CD4-positive, alpha-beta memory T cell (primary cell): ENCODE measurements at regions of chr17 and their contacts with region 1.

Region 1: GRCh38 chr17:34892461-34893249 is 68.6 kb downstream of the CCT6B start:
- DNase-seq: peak in 4 of 5 donors; percentile 18 to 26 (median 22)
- H3K4me3 ChIP-seq: no peak overlapping the region
- H3K4me3 Mint-ChIP-seq: no peak overlapping the region
- H3K27ac ChIP-seq: no peak overlapping the region
- H3K27ac Mint-ChIP-seq: no peak overlapping the region
- H3K4me1 ChIP-seq: no peaks in the 10 kb centered on the region
- H3K4me1 Mint-ChIP-seq: no peaks in the 10 kb centered on the region
- H3K27me3 ChIP-seq: no peaks in the 10 kb centered on the region
- H3K27me3 Mint-ChIP-seq: peaks cover 23 to 38% of the 10 kb centered on the region in 2 donors

Region 2: DNA sequence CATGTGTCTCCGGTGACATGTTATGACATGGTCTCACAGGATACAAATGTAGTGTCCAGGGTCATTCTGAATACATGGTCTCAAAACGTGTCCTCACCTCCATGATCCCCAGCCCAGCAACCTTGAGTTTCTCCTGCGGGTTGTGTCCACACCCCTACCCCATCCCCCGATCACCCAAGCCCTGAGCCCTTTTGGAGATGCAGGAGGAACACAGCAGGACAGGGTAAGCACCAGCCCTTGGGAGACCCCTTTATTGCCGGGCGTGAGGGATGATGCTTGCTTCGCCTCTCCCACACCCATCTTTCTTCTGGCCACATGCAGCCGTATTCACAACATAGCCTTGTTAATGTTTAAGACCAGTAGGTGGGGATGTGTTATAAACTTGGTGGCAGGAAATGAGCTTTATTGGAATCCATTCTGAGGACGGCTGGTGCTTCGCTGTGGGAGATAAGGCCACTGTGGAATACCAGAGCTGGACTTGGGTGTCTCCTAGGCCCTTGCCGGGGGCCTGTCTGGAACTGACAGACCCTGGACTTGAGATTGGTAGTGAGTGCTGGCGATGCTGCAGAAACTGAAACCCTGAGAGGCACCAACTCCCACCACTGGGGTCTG is 307.7 kb before region 1 on chr17:
- CTCF ChIA-PET with region 1: no interaction called
- POLR2A ChIA-PET with region 1: no interaction called
- intact Hi-C with region 1: loop called (anchors 5 kb)
- DNase-seq: peak in 2 of 5 donors; percentile 10 to 16
- H3K4me3 ChIP-seq: no peak overlapping the region
- H3K4me3 Mint-ChIP-seq: no peak overlapping the region
- H3K27ac ChIP-seq: no peak overlapping the region
- H3K27ac Mint-ChIP-seq: no peak overlapping the region
- H3K4me1 ChIP-seq: peaks cover 10% of the 10 kb centered on the region
- H3K4me1 Mint-ChIP-seq: peaks cover 0 to 32% (median 3%) of the 10 kb centered on the region in 4 donors
- H3K27me3 ChIP-seq: peaks cover 27% of the 10 kb centered on the region
- H3K27me3 Mint-ChIP-seq: peaks cover 48 to 50% of the 10 kb centered on the region in 2 donors